Heart right ventricle (tissue), 16 donors: ENCODE measurements at regions of chr1 and their contacts with region 1.

Region 1: GRCh38 chr1:10209905-10210810 is at the start of gene KIF1B:
- DNase-seq: peak; percentile 98 to 99
- ATAC-seq: peak; percentile 96 to 98 (median 97)
- H3K4me3 ChIP-seq: peak within 1 kb of the TSS; percentile 74 to 97 (median 94)
- H3K27ac ChIP-seq: peak within 1 kb of the TSS; percentile 97 to 100 (median 99)
- H3K4me1 ChIP-seq: peaks cover 5 to 42% (median 39%) of the 10 kb centered on the region in 9 donors
- H3K27me3 ChIP-seq: no peaks in the 10 kb centered on the region
- CTCF ChIP-seq: peak; percentile 96 to 100 (median 99)
- total RNA-seq, gene KIF1B: 64.9 to 107 (median 89.9) TPM

Region 2: GRCh38 chr1:10245674-10246073 is 35.5 kb after region 1 on chr1:
- intact Hi-C with region 1: loop called in 5 of 10 experiments (anchors 5 kb)
- DNase-seq: no peak
- ATAC-seq: no peak
- H3K4me3 ChIP-seq: no peak overlapping the region
- H3K27ac ChIP-seq: no peak overlapping the region
- H3K4me1 ChIP-seq: peaks cover 0 to 59% (median 32%) of the 10 kb centered on the region in 9 donors
- H3K27me3 ChIP-seq: no peaks in the 10 kb centered on the region
- CTCF ChIP-seq: no peak

Region 3: GRCh38 chr1:10271869-10272268 is 61.7 kb after region 1 on chr1:
- intact Hi-C with region 1: loop called in 1 of 10 experiments (anchors 10 kb)
- DNase-seq: no peak
- ATAC-seq: no peak
- H3K4me3 ChIP-seq: no peak overlapping the region
- H3K27ac ChIP-seq: peak overlapping the region in 3 of 10 donors; percentile 9 to 37 (median 10)
- H3K4me1 ChIP-seq: peaks cover 0 to 31% (median 13%) of the 10 kb centered on the region in 9 donors
- H3K27me3 ChIP-seq: no peaks in the 10 kb centered on the region
- CTCF ChIP-seq: no peak

Region 4: GRCh38 chr1:10299151-10299550 is 89.0 kb after region 1 on chr1:
- intact Hi-C with region 1: loop called in 2 of 10 experiments (anchors 5 to 10 kb)
- DNase-seq: no peak
- ATAC-seq: no peak
- H3K4me3 ChIP-seq: no peak overlapping the region
- H3K27ac ChIP-seq: peak overlapping the region in 3 of 10 donors; percentile 29 to 57 (median 41)
- H3K4me1 ChIP-seq: peaks cover 0 to 24% (median 12%) of the 10 kb centered on the region in 9 donors
- H3K27me3 ChIP-seq: no peaks in the 10 kb centered on the region
- CTCF ChIP-seq: no peak